ENCODE measurements at regions of chr11 and their contacts with region 1.

Region 1: DNA sequence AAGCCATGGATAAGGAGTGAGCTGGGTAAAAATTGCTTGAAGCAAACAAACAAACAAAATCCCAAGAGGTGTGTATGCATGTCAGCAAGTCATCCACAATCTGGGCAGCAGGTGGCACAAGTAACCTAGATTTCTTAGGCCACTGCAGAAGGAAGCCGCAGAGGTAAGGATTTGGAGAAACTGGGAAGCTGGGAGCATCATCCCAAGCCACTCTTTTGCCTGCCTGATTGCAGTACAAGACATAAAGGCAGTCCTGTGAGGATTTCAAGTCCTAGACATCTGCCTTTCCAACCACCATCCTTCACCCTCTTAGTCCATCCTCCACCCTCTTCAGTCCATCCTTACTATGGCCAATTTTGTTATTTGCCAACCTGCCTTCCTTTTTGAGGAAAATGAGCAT is 67.2 kb upstream of the BMAL1 start:
- DNase-seq: peak; percentile 81
- H3K4me3 Mint-ChIP-seq: no peak overlapping the region
- H3K27ac Mint-ChIP-seq: no peak overlapping the region
- H3K4me1 Mint-ChIP-seq: peaks cover 27% of the 10 kb centered on the region
- H3K27me3 Mint-ChIP-seq: no peaks in the 10 kb centered on the region
- CTCF ChIP-seq: peak; percentile 84

Region 2: DNA sequence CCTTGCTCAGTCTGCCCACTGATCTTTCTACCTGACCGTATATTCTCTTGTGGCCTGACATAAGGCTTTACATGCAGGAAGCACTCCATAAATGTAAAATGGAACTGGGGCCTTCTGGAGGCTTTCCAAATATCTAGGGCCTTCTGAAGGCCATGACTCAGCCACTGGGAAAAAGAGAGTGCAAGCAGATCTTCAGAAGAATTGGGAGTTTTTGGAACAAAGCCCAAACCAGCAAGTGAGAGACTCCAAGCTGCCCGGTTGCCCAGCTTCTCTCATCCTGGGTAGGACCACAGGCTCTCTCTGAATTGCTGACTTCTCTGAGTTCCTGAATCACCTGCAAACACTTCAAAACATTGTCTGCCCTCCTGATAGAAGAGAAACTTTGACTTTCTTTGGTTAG is 40.7 kb before region 1 on chr11:
- CTCF ChIA-PET with region 1: no interaction called
- POLR2A ChIA-PET with region 1: no interaction called
- intact Hi-C with region 1: no loop called
- DNase-seq: peak; percentile 98
- H3K4me3 Mint-ChIP-seq: no peak overlapping the region
- H3K27ac Mint-ChIP-seq: no peak overlapping the region
- H3K4me1 Mint-ChIP-seq: peaks cover 40% of the 10 kb centered on the region
- H3K27me3 Mint-ChIP-seq: no peaks in the 10 kb centered on the region
- CTCF ChIP-seq: no peak

Region 3: GRCh38 chr11:13193613-13194012 is 16.8 kb before region 1 on chr11:
- CTCF ChIA-PET with region 1: interaction called, 10 read pairs
- POLR2A ChIA-PET with region 1: no interaction called
- intact Hi-C with region 1: no loop called
- DNase-seq: no peak
- H3K4me3 Mint-ChIP-seq: no peak overlapping the region
- H3K27ac Mint-ChIP-seq: no peak overlapping the region
- H3K4me1 Mint-ChIP-seq: no peaks in the 10 kb centered on the region
- H3K27me3 Mint-ChIP-seq: no peaks in the 10 kb centered on the region
- CTCF ChIP-seq: no peak

Region 4: DNA sequence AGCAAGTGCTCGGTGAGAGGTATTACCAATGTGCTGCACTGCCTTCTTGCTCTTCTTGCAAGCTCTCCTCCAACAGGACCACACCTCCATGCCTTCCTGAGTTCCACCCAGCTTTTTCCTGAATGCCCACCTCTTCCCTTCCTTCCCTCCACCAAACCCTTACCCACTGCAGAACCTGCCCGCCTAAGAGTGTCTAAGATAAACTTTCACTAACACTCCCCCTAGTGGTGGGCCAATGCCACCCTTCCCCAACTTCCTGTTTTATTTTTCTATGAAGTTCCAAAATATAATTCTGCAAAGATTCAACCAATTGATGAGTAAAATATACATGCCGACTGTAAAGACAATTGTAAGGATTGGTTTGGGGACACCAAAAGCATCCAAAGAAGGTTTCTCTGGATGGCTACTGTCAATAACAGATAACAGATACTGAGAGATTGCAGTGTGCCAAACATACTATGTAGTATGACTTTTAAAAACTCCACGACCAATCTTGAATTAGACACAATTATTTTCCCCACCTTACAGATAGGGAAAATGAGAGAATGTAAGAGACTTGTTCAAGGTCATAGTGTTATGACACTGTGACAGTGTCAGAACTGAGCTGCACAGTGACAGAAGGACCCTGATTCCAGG is 28.6 kb after region 1 on chr11:
- CTCF ChIA-PET with region 1: interaction called, 47 read pairs
- POLR2A ChIA-PET with region 1: interaction called, 3 read pairs
- intact Hi-C with region 1: loop called (anchors 1 kb)
- DNase-seq: peak; percentile 72
- H3K4me3 Mint-ChIP-seq: no peak overlapping the region
- H3K27ac Mint-ChIP-seq: no peak overlapping the region
- H3K4me1 Mint-ChIP-seq: peaks cover 6% of the 10 kb centered on the region
- H3K27me3 Mint-ChIP-seq: no peaks in the 10 kb centered on the region
- CTCF ChIP-seq: peak; percentile 68

Region 5: DNA sequence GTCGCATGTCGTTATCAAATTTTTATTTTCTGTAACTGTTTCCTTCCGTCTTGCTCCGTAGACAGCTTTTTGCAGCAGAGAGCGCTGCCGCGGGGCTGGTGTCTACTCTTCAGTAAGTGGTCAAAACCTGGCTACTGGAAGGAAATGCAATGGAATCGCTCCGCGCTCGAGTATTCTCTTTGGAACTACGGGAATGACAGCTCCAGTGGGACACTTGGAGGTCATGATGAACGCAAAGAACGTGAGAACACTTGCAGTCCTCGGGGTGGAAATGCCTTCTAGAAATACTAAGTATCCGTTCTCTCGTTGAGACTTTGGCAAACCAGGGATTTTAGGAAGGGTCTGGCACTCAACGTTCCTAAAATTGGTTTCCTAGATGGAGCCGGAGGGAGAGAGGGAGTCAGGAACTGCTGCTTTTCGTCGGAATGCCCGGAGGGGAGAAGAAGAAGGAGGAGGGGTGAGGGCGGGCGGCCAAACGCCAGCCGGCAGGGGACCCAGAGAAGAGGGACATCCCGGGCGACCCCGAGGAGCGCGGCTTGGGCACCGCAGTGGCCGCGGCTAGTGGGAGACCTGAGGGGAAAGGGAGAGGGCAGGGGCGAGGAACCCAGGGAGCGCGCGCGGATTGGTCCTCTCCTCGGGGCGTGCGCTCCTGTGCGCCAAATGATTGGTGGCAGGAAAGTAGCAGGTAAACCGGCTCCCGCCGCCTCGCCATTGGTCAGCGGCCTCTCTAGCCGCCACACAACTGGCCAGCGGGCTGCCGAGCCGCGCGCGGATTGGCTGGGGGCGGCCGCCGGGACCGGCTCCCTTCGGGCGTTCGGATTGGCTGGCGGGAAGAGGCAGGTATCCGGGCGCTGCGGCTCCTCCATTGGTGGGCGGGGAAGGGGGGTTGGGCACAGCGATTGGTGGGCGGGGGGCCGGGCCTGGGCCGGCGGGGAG is 66.7 kb after region 1 on chr11:
- CTCF ChIA-PET with region 1: interaction called, 6 read pairs
- POLR2A ChIA-PET with region 1: interaction called, 18 read pairs
- intact Hi-C with region 1: loop called (anchors 2 kb)
- DNase-seq: peak; percentile 98
- H3K4me3 Mint-ChIP-seq: peak overlapping the region; percentile 91
- H3K27ac Mint-ChIP-seq: no peak overlapping the region
- H3K4me1 Mint-ChIP-seq: peaks cover 31% of the 10 kb centered on the region
- H3K27me3 Mint-ChIP-seq: no peaks in the 10 kb centered on the region
- CTCF ChIP-seq: no peak

Region 6: GRCh38 chr11:13335319-13335718 is 124.9 kb after region 1 on chr11:
- CTCF ChIA-PET with region 1: interaction called, 311 read pairs
- POLR2A ChIA-PET with region 1: interaction called, 59 read pairs
- intact Hi-C with region 1: loop called (anchors 1 kb)
- DNase-seq: peak; percentile 88
- H3K4me3 Mint-ChIP-seq: no peak overlapping the region
- H3K27ac Mint-ChIP-seq: peak overlapping the region; percentile 20
- H3K4me1 Mint-ChIP-seq: peaks cover 62% of the 10 kb centered on the region
- H3K27me3 Mint-ChIP-seq: no peaks in the 10 kb centered on the region
- CTCF ChIP-seq: peak; percentile 73

Region 7: DNA sequence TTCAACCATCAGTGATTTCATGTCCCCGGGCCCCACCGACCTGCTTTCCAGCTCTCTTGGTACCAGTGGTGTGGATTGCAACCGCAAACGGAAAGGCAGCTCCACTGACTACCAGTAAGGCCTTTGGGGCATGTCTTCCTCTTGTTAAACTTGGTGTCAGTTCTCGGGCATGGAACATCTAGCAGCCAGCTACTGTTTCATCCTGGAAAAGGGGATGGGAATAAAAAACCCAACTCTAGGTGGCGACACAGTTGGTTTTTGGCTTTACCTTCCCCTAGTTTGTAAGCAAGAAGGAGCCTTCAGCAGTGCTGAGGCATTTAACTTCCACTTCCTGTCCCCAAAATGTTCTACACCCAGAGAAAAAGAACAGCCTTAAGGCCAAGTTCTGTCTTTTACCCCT is 143.9 kb after region 1 on chr11:
- CTCF ChIA-PET with region 1: interaction called, 24 read pairs
- POLR2A ChIA-PET with region 1: interaction called, 6 read pairs
- intact Hi-C with region 1: no loop called
- DNase-seq: peak; percentile 43
- H3K4me3 Mint-ChIP-seq: no peak overlapping the region
- H3K27ac Mint-ChIP-seq: peak overlapping the region; percentile 46
- H3K4me1 Mint-ChIP-seq: no peaks in the 10 kb centered on the region
- H3K27me3 Mint-ChIP-seq: no peaks in the 10 kb centered on the region
- CTCF ChIP-seq: no peak

Region 8: GRCh38 chr11:13462901-13463778 is 252.7 kb after region 1 on chr11 and contains the start of gene BTBD10:
- CTCF ChIA-PET with region 1: interaction called, 12 read pairs
- POLR2A ChIA-PET with region 1: interaction called, 6 read pairs
- intact Hi-C with region 1: loop called (anchors 1 kb)
- DNase-seq: peak; percentile 95
- H3K4me3 Mint-ChIP-seq: peak within 1 kb of the TSS; percentile 99
- H3K27ac Mint-ChIP-seq: peak within 1 kb of the TSS; percentile 96
- H3K4me1 Mint-ChIP-seq: peaks cover 25% of the 10 kb centered on the region
- H3K27me3 Mint-ChIP-seq: no peaks in the 10 kb centered on the region
- CTCF ChIP-seq: no peak
- total RNA-seq, gene BTBD10: 38.3 and 42.2 TPM in 2 replicates

Measured in MCF 10A (cell line).